ENCODE measurements at regions of chr1 and their contacts with region 1.

Region 1: GRCh38 chr1:169546087-169546995 is 39.9 kb downstream of the F5 start:
- DNase-seq: peak; percentile 90
- H3K4me3 Mint-ChIP-seq: no peak overlapping the region
- H3K27ac Mint-ChIP-seq: no peak overlapping the region
- H3K4me1 Mint-ChIP-seq: peaks cover 19% of the 10 kb centered on the region
- H3K27me3 Mint-ChIP-seq: no peaks in the 10 kb centered on the region

Region 2: GRCh38 chr1:168603501-168604110 is 942.7 kb before region 1 on chr1:
- intact Hi-C with region 1: loop called (anchors 1 kb)
- DNase-seq: peak; percentile 89
- H3K4me3 Mint-ChIP-seq: no peak overlapping the region
- H3K27ac Mint-ChIP-seq: no peak overlapping the region
- H3K4me1 Mint-ChIP-seq: peaks cover 2% of the 10 kb centered on the region
- H3K27me3 Mint-ChIP-seq: peaks cover 15% of the 10 kb centered on the region

Region 3: GRCh38 chr1:169466259-169467230 is 79.8 kb before region 1 on chr1:
- intact Hi-C with region 1: loop called (anchors 2 kb)
- DNase-seq: peak; percentile 73
- H3K4me3 Mint-ChIP-seq: no peak overlapping the region
- H3K27ac Mint-ChIP-seq: no peak overlapping the region
- H3K4me1 Mint-ChIP-seq: peaks cover 5% of the 10 kb centered on the region
- H3K27me3 Mint-ChIP-seq: no peaks in the 10 kb centered on the region

Region 4: DNA sequence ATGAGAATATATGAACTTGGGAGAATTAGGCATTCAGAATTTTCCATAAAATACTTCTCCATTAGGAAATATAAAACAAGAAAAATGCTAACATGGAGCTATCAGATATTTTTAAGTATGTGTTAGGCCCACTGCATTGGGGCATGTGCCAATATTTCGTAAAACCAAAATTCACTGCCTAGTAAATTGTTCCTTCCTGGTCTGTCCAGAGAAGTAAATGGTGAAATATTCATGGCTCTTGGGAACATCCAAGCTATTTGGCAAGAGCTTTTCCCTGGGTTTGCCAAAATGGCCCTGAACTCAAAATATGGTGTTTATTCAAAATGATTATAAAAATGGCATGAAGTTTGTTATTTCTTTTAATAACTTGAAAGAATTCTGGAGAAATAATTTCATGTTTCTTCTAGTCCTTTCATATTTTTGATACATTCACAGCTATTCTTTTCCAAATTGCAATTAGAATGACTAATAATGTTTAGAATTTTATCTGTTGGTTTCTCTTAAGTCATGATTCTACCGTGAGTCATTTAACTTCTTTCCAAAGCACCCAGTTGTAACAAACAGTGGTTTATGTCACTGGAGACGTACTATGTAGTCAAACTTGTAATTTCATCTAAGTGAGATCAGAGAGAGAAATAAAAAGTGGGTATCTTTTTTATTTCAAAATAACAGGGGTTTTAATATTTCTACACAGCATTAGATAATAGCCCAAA is 34.9 kb before region 1 on chr1:
- intact Hi-C with region 1: no loop called
- DNase-seq: no peak
- H3K4me3 Mint-ChIP-seq: no peak overlapping the region
- H3K27ac Mint-ChIP-seq: no peak overlapping the region
- H3K4me1 Mint-ChIP-seq: peaks cover 13% of the 10 kb centered on the region
- H3K27me3 Mint-ChIP-seq: no peaks in the 10 kb centered on the region

Region 5: GRCh38 chr1:169809370-169810095 is 263.2 kb after region 1 on chr1:
- intact Hi-C with region 1: loop called (anchors 5 kb)
- DNase-seq: peak; percentile 63
- H3K4me3 Mint-ChIP-seq: no peak overlapping the region
- H3K27ac Mint-ChIP-seq: no peak overlapping the region
- H3K4me1 Mint-ChIP-seq: peaks cover 7% of the 10 kb centered on the region
- H3K27me3 Mint-ChIP-seq: no peaks in the 10 kb centered on the region

Measured in activated CD4-positive, alpha-beta T cell treated with anti-CD3 and anti-CD28 coated beads, Interleukin-2, amount 10 ng/mL, durations not matched to agents 24 days and 14 days (primary cell).